Activated B cell treated with CpG ODN at 0.5 μM for 24 hours (primary cell): ENCODE measurements at regions of chr17 and their contacts with region 1.

Region 1: DNA sequence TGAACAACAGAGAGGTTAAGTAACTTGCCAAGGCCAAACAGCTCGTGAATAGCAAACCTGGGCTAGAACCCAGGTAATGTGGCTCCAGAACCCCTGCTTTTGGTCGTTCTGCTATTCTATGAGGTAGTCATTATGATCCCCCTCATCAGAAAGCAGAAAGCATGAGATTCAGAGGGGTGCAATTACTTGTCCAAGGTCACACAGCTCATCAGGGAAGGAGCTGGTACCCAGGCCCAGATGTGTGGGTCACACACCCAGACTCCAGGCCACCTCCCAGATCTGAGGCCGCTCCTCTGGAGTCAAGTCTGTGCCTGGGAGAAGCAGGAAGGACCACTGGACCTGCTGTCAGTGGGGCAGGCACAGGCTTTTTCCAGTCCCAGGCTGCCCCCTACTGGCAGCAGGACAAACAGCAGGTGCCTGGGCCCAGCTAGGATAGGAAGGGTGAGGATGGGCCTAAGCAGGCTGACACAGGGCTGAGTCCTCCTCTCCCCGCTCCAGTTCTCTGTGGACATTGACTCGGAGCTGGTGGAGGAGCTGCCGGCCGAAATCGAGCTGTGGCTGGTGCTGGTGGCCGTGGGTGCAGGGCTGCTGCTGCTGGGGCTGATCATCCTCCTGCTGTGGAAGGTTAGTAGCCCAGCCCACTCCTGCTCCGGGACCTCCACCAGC is 7.8 kb upstream of the PDK2 start:
- DNase-seq: peak; percentile 66
- ATAC-seq: peak; percentile 97
- H3K4me3 Mint-ChIP-seq: no peak overlapping the region
- H3K27ac Mint-ChIP-seq: no peak overlapping the region
- H3K4me1 Mint-ChIP-seq: no peaks in the 10 kb centered on the region
- H3K27me3 Mint-ChIP-seq: no peaks in the 10 kb centered on the region
- CTCF ChIP-seq: peak; percentile 87

Region 2: DNA sequence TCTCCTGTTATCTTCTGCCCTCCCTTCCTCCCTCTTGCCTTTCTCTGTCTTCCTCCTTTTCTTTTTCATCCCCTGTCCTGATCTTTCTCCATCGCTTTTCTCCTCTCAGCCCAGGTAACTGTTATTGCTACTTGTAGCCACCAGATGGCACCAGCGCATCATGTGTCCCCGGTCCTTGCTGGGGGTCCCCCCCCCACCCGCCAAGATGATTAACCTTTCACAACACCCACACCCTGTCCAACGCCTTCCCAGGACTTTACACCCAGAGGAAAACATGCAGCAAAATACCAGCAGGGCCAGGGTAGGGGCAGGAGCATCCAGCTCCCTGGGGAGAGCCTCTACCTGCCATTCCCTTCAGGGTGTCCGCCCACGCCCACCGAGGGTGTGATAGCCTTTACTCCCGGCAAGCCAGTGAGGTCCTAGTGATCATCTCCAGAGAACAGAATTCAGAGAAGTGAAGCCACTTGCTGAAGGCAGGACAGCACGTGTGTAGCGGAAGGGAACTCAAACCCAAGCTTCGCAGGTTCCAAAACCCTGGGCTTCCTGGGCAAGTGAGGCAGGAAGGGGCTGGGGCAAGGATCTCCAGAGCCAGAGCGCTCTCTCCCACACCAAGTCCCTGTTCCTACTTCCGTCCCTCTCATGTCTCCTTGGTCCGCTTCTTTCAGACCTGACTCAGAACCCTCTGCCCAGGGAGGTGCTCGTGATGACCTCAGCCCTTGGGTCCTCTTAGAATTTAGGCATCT is 226.1 kb before region 1 on chr17:
- CTCF ChIA-PET with region 1: interaction called, 9 read pairs
- POLR2A ChIA-PET with region 1: no interaction called
- intact Hi-C with region 1: loop called (anchors 1 kb)
- DNase-seq: peak; percentile 40
- ATAC-seq: peak; percentile 78
- H3K4me3 Mint-ChIP-seq: no peak overlapping the region
- H3K27ac Mint-ChIP-seq: no peak overlapping the region
- H3K4me1 Mint-ChIP-seq: no peaks in the 10 kb centered on the region
- H3K27me3 Mint-ChIP-seq: peaks cover 30% of the 10 kb centered on the region
- CTCF ChIP-seq: peak; percentile 17

Region 3: DNA sequence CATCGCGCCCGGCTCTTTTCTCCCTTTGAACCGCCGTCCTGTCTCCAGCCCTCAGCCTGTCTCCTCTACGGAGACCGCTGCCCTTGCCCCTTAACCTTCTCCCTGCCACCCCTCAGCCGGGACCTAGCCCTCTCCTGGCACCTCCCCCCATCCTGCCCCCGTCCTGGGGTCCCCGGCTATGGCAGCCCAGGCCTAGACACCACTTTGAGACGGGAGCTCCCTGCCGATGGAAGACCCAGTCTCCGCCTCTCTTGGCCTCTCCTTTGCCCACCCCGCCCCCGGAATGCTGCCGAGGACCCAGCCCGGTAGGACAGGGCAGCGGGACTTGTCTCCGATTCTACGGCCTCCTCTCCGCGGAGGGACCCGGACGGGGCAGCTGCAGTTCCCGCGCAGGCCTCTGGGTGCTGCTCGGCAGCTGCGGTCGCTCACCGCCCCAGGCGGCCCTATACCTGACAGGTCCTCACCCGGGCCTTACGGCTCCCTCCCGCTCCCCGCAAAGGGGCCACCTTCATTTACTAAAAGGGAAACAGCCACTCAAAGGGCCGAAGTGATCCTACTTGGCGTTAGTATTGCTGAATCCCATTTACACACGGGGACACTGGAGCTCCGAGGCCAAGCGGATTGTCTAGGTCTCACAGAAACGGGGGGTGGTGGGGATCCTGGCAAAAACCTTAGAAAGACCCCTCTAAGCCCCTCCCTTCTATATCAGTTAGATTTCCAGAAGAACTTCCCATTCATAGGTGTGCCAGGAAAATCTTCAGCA is 206.9 kb before region 1 on chr17:
- CTCF ChIA-PET with region 1: no interaction called
- POLR2A ChIA-PET with region 1: no interaction called
- intact Hi-C with region 1: loop called (anchors 5 kb)
- DNase-seq: peak; percentile 65
- ATAC-seq: peak; percentile 98
- H3K4me3 Mint-ChIP-seq: peak overlapping the region; percentile 28
- H3K27ac Mint-ChIP-seq: no peak overlapping the region
- H3K4me1 Mint-ChIP-seq: peaks cover 6% of the 10 kb centered on the region
- H3K27me3 Mint-ChIP-seq: peaks cover 48% of the 10 kb centered on the region
- CTCF ChIP-seq: peak; percentile 69

Region 4: DNA sequence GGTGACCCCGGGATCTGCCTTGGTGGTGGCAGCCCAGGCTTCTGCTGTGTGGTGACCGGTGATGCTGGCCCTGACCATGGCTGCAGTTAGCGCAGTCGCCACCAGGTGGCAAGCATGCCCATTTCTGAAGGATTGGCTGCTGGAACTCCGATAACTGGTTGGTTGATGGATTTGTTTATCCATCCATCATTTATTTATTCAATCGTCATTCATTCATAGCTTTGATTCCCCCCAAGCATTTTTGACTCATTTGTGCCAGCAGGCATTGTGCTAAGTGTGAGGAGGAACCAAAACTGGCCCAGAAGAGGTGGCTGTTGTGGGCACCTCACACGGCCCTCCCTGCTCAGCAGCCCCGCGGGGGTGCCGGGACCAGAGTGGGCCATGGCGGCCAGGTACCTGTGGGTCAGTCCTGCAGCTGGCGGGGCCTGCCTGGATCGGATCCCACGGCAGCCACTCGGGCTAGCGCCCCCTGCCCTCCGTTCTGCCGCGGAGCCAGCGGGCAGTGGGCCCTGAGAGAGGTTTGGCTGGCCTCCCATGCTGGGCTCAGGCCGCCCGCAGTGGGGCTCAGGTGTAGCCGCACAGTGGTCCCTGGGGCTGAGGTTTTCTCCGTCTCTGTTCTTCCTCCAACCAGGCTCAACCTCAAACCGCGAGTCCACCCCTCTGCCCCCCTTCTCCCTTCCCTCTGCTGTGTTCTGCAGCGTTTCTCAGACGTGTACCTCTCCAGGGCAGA is 60.3 kb before region 1 on chr17:
- CTCF ChIA-PET with region 1: interaction called, 72 read pairs
- POLR2A ChIA-PET with region 1: interaction called, 3 read pairs
- intact Hi-C with region 1: loop called (anchors 1 kb)
- DNase-seq: peak; percentile 72
- ATAC-seq: peak; percentile 82
- H3K4me3 Mint-ChIP-seq: peak overlapping the region; percentile 11
- H3K27ac Mint-ChIP-seq: no peak overlapping the region
- H3K4me1 Mint-ChIP-seq: peaks cover 9% of the 10 kb centered on the region
- H3K27me3 Mint-ChIP-seq: peaks cover 25% of the 10 kb centered on the region
- CTCF ChIP-seq: peak; percentile 86

Region 5: DNA sequence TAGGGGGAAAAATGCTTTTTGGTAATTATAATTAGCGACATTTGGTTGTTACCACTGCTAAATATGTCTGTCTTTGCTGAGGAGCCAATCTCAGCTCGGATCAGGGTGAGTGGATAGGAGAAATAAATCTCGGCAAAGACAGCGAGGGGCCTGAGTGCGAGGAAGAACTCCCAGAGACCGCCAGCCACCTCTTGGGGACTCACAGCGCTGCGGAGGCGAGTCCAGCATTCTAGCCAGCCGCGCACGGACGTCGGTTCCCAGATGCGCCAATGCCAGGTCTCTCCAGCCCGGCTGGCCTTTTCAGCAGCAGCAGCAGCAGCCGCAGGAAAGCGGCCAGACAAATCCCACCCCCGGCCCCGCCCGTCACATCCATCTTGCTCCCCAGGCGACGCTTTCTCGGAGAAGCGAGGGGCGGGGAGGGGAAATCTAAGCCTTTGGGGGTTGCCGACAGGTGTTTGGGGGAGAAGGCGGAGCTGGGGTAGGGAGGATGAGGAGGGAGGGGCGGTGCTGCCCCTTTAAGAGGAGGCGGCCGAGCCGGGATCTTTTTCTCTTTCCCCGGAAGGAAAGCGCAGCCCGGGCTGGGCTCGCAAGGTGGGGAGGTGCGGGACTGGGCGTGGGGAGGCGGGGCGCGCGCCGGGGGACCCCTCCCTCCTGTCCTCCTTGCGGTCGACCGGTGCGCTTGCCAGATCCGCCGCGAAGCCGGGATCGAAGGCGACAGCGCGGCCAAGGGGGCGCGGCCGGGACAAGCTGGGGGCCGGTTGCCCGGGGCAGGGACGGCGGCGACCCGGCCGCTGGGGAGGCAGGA is 31.8 kb before region 1 on chr17 and contains the start of gene ITGA3:
- CTCF ChIA-PET with region 1: interaction called, 5 read pairs
- POLR2A ChIA-PET with region 1: no interaction called
- intact Hi-C with region 1: loop called (anchors 2 kb)
- DNase-seq: peak; percentile 38
- ATAC-seq: peak; percentile 64
- H3K4me3 Mint-ChIP-seq: peak within 1 kb of the TSS; percentile 91
- H3K27ac Mint-ChIP-seq: peak within 1 kb of the TSS; percentile 59
- H3K4me1 Mint-ChIP-seq: peaks cover 29% of the 10 kb centered on the region
- H3K27me3 Mint-ChIP-seq: peaks cover 21% of the 10 kb centered on the region
- CTCF ChIP-seq: no peak
- total RNA-seq, gene ITGA3: 7.7 and 9.8 TPM in 2 replicates

Region 6: GRCh38 chr17:50076591-50077235 is 10.7 kb before region 1 on chr17:
- CTCF ChIA-PET with region 1: interaction called, 12 read pairs
- POLR2A ChIA-PET with region 1: no interaction called
- intact Hi-C with region 1: no loop called
- DNase-seq: no peak
- ATAC-seq: no peak
- H3K4me3 Mint-ChIP-seq: no peak overlapping the region
- H3K27ac Mint-ChIP-seq: no peak overlapping the region
- H3K4me1 Mint-ChIP-seq: peaks cover 24% of the 10 kb centered on the region
- H3K27me3 Mint-ChIP-seq: no peaks in the 10 kb centered on the region
- CTCF ChIP-seq: no peak

Region 7: GRCh38 chr17:50255766-50256635 is 168.6 kb after region 1 on chr17:
- CTCF ChIA-PET with region 1: no interaction called
- POLR2A ChIA-PET with region 1: no interaction called
- intact Hi-C with region 1: no loop called
- DNase-seq: no peak
- ATAC-seq: no peak
- H3K4me3 Mint-ChIP-seq: no peak overlapping the region
- H3K27ac Mint-ChIP-seq: no peak overlapping the region
- H3K4me1 Mint-ChIP-seq: no peaks in the 10 kb centered on the region
- H3K27me3 Mint-ChIP-seq: peaks cover 19% of the 10 kb centered on the region
- CTCF ChIP-seq: no peak